HEK293 (cell line): ENCODE measurements at regions of chr17 and their contacts with region 1.

Region 1: GRCh38 chr17:46002311-46002972 is 3.4 kb downstream of the STH start:
- H3K4me3 ChIP-seq: no peak overlapping the region
- H3K27ac ChIP-seq: no peak overlapping the region
- H3K4me1 ChIP-seq: peaks cover 4% of the 10 kb centered on the region; the same call in 1 of the 2 replicates
- CTCF ChIP-seq: peak; percentile 83

Region 2: GRCh38 chr17:45973099-45973780 is 29.2 kb before region 1 on chr17:
- CTCF ChIA-PET with region 1: no interaction called
- POLR2A ChIA-PET with region 1: no interaction called
- H3K4me3 ChIP-seq: no peak overlapping the region
- H3K27ac ChIP-seq: no peak overlapping the region
- H3K4me1 ChIP-seq: no peaks in the 10 kb centered on the region
- CTCF ChIP-seq: no peak

Region 3: GRCh38 chr17:45990886-45991285 is 11.6 kb before region 1 on chr17:
- CTCF ChIA-PET with region 1: interaction called, 12 read pairs
- POLR2A ChIA-PET with region 1: no interaction called
- H3K4me3 ChIP-seq: no peak overlapping the region
- H3K27ac ChIP-seq: no peak overlapping the region
- H3K4me1 ChIP-seq: no peaks in the 10 kb centered on the region
- CTCF ChIP-seq: no peak

Region 4: DNA sequence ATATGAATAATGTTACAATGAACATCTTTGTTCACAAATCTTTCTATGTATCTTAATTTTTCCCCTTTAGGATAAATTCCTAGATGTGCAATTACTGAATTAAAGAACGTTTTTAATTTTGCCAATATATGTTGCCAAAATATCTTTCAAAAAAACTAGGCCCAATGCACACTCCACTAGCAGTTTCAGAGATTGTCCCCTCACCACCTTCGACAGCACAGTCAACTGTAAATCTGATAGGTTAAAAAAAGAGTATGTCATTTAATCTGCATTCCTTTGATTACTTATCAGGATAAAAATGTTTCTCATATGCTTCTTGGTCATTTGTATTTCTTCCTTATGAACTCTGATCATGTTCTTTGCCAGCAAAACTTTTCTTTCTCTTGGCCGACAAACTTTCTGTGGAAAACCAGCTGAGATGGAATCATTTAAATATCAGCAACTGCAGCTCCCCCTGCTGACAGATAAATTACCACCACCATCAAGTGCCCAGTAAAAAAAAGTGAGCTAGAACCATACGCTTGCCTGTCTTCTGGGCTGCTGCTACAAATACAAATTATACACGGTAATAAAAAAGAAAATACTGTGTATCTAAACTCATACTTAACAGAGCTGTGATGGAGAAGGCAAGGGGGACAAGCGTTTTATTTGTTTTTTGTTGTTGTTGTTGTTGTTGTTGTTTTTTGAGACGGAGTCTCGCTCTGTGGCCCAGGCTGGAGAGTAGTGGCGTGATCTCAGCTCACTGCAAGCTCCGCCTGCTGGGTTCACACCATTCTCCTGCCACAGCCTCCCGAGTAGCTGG is 210.4 kb after region 1 on chr17:
- CTCF ChIA-PET with region 1: interaction called, 48 read pairs
- POLR2A ChIA-PET with region 1: no interaction called
- H3K4me3 ChIP-seq: no peak overlapping the region
- H3K27ac ChIP-seq: no peak overlapping the region
- H3K4me1 ChIP-seq: no peaks in the 10 kb centered on the region
- CTCF ChIP-seq: peak; percentile 79